ENCODE measurements at regions of chr10 and their contacts with region 1.

Region 1: DNA sequence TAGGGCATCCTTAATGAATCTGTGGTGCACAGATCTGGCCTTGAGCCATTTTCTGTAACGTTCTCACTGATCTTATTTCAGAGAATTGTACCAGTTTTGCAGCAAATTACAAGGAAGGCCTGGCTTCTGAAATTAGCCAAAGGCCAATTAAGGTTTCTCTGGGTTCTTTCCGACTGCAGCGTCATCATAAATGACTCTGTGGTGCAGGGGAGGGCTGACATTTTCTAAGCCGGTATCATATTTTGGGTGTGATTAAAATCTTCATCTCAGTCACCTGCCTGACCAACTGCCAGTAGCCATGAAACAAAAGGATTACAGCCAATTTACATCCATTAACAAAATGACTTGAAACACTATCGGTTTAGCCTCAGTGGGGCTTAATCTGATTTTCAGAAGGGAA is 363.7 kb downstream of the ADRA2A start:
- DNase-seq: no peak
- H3K27ac ChIP-seq: no peak overlapping the region
- CTCF ChIP-seq: no peak

Region 2: DNA sequence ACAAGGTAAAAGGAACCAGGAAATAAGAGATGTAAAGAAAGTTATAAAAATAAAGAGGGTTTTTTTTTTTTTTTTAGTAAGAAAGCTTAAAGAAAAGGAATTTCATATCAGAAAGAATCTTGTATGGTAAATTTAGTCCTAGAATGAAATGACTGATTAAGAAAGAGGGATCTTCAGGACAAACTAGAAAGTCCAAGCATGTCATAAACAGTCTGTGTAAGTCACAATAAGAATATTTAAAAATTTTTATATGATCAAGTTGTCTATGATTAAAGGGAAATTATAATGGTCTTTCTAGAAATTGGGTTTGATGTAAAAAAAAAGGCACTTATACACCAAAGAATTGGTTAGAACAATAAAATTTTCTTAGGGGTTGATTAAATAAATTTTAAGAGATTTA is 1806.7 kb before region 1 on chr10:
- CTCF ChIA-PET with region 1: no interaction called
- POLR2A ChIA-PET with region 1: no interaction called
- DNase-seq: no peak
- H3K27ac ChIP-seq: no peak overlapping the region
- CTCF ChIP-seq: no peak

Region 3: GRCh38 chr10:111186358-111186757 is 254.1 kb before region 1 on chr10:
- CTCF ChIA-PET with region 1: interaction called, 10 read pairs
- POLR2A ChIA-PET with region 1: no interaction called
- DNase-seq: no peak
- H3K27ac ChIP-seq: no peak overlapping the region
- CTCF ChIP-seq: no peak

Region 4: DNA sequence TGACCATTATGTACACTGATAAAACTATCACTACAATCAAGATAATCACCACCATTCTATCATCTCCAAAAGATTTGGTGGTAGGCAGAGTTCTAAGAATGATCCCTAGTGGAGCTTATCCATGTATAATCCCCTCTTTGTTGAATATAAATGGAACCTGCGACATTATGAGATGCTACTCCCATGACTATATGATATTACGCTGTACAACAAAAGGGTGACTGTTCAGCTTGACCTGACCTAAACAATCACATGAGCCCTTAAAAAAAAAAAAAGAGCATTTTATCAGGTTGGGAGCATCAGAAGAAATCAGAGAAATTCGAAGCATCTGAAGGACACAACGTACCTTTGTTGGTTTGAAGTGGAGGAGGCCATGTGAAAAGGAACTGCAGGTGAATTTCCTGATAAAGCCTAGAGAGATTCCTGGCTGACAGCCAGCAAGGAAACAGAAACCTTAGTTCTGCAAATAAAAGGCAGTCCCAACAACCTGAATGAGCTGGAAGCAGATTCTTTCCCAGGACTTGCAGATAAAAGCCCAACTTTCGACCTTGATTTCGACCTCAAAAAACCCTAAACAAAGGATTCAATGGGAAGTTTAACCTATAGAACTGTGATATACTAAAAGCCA is 93.0 kb before region 1 on chr10:
- CTCF ChIA-PET with region 1: no interaction called
- POLR2A ChIA-PET with region 1: no interaction called
- DNase-seq: no peak
- H3K27ac ChIP-seq: no peak overlapping the region
- CTCF ChIP-seq: no peak

Region 5: DNA sequence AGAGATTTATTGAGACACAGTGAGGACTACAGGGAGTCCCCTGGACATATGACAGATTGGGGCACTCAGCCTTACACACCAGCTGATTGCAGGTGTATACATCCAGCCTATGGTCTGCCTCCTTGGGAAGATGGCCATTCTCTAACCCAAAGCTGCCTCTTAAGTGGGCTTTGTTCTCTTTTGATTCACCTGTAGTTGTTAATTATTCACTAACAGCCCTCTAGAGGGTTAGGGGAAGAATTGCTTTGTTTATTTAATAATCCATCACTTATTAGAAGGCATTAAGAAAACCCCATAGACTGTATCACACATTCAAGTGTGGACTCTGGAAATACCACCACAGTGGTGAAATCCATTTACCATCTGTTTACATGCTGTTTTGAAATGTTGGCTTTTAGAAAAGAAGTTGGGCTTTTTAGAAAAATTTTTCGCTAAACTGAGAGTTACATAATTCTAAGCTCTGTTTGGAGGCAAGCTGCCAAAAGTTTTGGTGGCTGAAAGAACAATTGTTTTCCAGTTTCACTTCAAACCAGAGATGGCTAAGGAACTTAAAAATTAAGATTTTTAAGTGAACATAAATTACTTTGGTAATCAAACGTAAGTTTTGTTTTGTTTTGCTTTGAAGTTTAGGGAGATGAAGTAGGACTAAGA is 15.4 kb after region 1 on chr10:
- CTCF ChIA-PET with region 1: no interaction called
- POLR2A ChIA-PET with region 1: no interaction called
- DNase-seq: no peak
- H3K27ac ChIP-seq: no peak overlapping the region
- CTCF ChIP-seq: no peak